Heart right ventricle (tissue), 16 donors: ENCODE measurements at regions of chr13 and their contacts with region 1.

Region 1: GRCh38 chr13:29210676-29211075 is 384.8 kb downstream of the SLC7A1 start:
- DNase-seq: no peak
- ATAC-seq: peak in 1 of 8 donors; percentile 48
- H3K4me3 ChIP-seq: no peak overlapping the region
- H3K27ac ChIP-seq: no peak overlapping the region
- H3K4me1 ChIP-seq: no peaks in the 10 kb centered on the region
- H3K27me3 ChIP-seq: no peaks in the 10 kb centered on the region
- CTCF ChIP-seq: no peak

Region 2: GRCh38 chr13:28408235-28408848 is 802.3 kb before region 1 on chr13:
- intact Hi-C with region 1: no loop called
- DNase-seq: peak; percentile 57 to 88
- ATAC-seq: peak; percentile 86 to 97 (median 90)
- H3K4me3 ChIP-seq: peak overlapping the region in 1 of 10 donors; percentile 3
- H3K27ac ChIP-seq: peak overlapping the region; percentile 15 to 86 (median 62)
- H3K4me1 ChIP-seq: peaks cover 0 to 76% (median 45%) of the 10 kb centered on the region in 9 donors
- H3K27me3 ChIP-seq: peaks cover 0 to 6% (median 0%) of the 10 kb centered on the region in 7 donors
- CTCF ChIP-seq: peak in 3 of 9 donors; percentile 21 to 34 (median 23)

Region 3: GRCh38 chr13:29105777-29106176 is 104.9 kb before region 1 on chr13:
- intact Hi-C with region 1: no loop called
- DNase-seq: no peak
- ATAC-seq: no peak
- H3K4me3 ChIP-seq: no peak overlapping the region
- H3K27ac ChIP-seq: no peak overlapping the region
- H3K4me1 ChIP-seq: peaks cover 0 to 23% (median 0%) of the 10 kb centered on the region in 9 donors
- H3K27me3 ChIP-seq: no peaks in the 10 kb centered on the region
- CTCF ChIP-seq: peak in 1 of 9 donors; percentile 16

Region 4: GRCh38 chr13:29354377-29354776 is 143.7 kb after region 1 on chr13:
- intact Hi-C with region 1: loop called in 4 of 10 experiments (anchors 5 kb)
- DNase-seq: no peak
- ATAC-seq: no peak
- H3K4me3 ChIP-seq: no peak overlapping the region
- H3K27ac ChIP-seq: no peak overlapping the region
- H3K4me1 ChIP-seq: no peaks in the 10 kb centered on the region
- H3K27me3 ChIP-seq: peaks cover 0 to 8% (median 0%) of the 10 kb centered on the region in 7 donors
- CTCF ChIP-seq: no peak